RWPE1 (cell line): ENCODE measurements at regions of chr17 and their contacts with region 1.

Region 1: GRCh38 chr17:82534401-82534837 is 14.9 kb downstream of the FOXK2 start:
- DNase-seq: no peak
- H3K27ac ChIP-seq: peak overlapping the region; percentile 78
- CTCF ChIP-seq: no peak

Region 2: DNA sequence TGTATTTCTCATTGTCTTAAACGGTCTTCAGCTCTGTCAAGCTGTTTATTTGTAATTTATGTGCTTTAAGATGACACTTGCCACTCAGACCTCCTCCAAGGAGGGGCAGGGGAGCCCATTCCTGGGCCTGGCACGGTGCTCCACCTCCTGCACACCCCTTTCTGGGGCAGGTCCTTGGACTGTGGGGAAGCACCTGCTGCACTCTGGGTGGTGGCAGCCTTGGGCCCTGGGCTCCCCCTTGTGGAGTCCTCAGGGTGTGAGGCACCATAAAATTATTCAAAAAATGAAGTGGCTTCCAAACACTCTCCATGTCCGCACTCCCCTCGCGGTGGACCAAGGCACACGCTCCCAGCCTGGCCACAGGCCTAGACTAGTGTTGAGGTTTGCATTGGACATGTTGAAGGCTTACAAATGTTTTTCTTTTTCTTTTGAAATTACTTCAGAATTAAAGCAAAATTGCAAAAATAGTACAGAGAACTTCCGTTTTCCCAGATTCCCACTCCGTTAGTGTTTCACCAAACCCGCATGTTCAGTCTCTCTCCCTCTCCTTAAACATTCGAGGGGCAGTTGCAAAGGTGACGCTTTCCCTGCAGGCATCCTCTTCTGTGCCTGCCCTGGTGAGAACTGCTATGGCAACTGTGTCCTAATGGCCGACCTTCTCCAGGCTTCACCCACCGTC is 17.5 kb after region 1 on chr17:
- CTCF ChIA-PET with region 1: interaction called, 10 read pairs
- POLR2A ChIA-PET with region 1: no interaction called
- DNase-seq: peak; percentile 87
- H3K27ac ChIP-seq: peak overlapping the region; percentile 57
- CTCF ChIP-seq: peak; percentile 87